ENCODE measurements at regions of chr2 and their contacts with region 1.

Region 1: DNA sequence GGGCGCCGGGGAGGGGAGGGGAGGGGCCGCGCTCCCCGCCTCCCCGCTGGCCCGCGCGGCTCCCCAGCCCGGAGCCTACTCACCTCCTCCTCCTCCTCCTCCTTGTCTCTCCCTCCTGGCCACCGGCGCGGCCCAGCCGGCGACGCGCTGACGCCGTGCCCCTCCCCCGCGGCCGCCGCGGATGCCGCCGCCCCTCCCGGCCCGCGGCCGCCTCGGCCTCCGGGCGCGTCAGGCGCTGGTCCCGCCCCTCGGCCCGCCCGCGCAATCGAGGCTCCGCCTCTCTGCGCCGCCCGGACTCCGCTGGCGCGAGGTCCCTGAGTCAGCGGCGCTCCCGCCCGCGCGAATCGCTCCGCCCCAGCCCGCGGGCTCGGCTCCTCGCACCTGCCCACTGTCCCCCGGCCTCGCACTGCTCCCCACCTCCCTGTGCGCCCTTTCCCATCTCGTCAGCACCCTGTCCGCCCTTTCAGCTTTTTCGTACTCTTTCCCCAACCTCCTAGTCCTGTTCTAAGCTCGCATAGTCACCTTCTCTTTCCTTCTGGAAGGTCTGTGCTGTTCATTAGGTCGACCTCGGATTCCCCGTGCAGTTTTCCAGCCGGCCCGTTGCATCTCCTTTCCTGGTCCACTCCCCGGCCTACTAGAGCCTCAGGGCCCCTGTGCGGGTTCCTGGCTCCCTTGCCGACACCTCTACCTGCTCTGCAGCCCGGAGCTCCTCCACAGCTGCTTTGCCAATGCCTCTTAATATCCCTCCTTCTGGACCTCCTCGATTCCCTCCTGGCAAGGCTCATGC is 187.4 kb downstream of the ZEB2 start:
- DNase-seq: peak; percentile 90
- H3K4me3 Mint-ChIP-seq: peak overlapping the region; percentile 92
- H3K27ac Mint-ChIP-seq: peak overlapping the region; percentile 82
- H3K4me1 Mint-ChIP-seq: peaks cover 44% of the 10 kb centered on the region
- H3K27me3 Mint-ChIP-seq: peaks cover 2% of the 10 kb centered on the region

Region 2: GRCh38 chr2:144111437-144111836 is 221.1 kb before region 1 on chr2:
- CTCF ChIA-PET with region 1: no interaction called
- POLR2A ChIA-PET with region 1: no interaction called
- DNase-seq: no peak
- H3K4me3 Mint-ChIP-seq: no peak overlapping the region
- H3K27ac Mint-ChIP-seq: no peak overlapping the region
- H3K4me1 Mint-ChIP-seq: no peaks in the 10 kb centered on the region
- H3K27me3 Mint-ChIP-seq: no peaks in the 10 kb centered on the region

Region 3: GRCh38 chr2:144183727-144184126 is 148.8 kb before region 1 on chr2:
- CTCF ChIA-PET with region 1: interaction called, 4 read pairs
- POLR2A ChIA-PET with region 1: interaction called, 29 read pairs
- DNase-seq: peak; percentile 82
- H3K4me3 Mint-ChIP-seq: peak overlapping the region; percentile 37
- H3K27ac Mint-ChIP-seq: peak overlapping the region; percentile 79
- H3K4me1 Mint-ChIP-seq: peaks cover 51% of the 10 kb centered on the region
- H3K27me3 Mint-ChIP-seq: no peaks in the 10 kb centered on the region

Region 4: GRCh38 chr2:144233317-144233716 is 99.2 kb before region 1 on chr2:
- CTCF ChIA-PET with region 1: no interaction called
- POLR2A ChIA-PET with region 1: interaction called, 19 read pairs
- DNase-seq: no peak
- H3K4me3 Mint-ChIP-seq: peak overlapping the region; percentile 23
- H3K27ac Mint-ChIP-seq: peak overlapping the region; percentile 87
- H3K4me1 Mint-ChIP-seq: peaks cover 69% of the 10 kb centered on the region
- H3K27me3 Mint-ChIP-seq: no peaks in the 10 kb centered on the region

Region 5: GRCh38 chr2:144240587-144241339 is 91.8 kb before region 1 on chr2:
- CTCF ChIA-PET with region 1: interaction called, 3 read pairs
- POLR2A ChIA-PET with region 1: interaction called, 19 read pairs
- DNase-seq: peak; percentile 32
- H3K4me3 Mint-ChIP-seq: no peak overlapping the region
- H3K27ac Mint-ChIP-seq: peak overlapping the region; percentile 79
- H3K4me1 Mint-ChIP-seq: peaks cover 61% of the 10 kb centered on the region
- H3K27me3 Mint-ChIP-seq: no peaks in the 10 kb centered on the region

Region 6: DNA sequence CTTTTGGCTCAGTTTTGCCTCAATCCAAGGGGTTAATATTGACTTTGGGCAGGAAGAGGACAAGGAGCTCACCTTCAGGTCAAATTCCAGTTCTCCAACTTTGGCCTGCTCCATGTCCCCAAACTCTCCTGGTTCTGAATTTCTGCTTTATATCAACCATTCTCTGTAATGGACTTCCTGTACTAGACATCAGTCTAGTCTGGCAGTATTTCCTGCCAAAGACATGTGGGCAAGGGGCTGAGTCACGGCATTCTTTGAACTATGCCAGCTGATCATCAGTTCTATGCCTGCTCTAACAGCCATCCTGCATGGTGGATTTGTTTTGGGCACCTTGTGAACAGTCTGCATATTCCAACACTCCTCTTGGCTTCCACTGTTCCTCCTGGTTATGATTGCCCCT is 12.1 kb before region 1 on chr2:
- CTCF ChIA-PET with region 1: no interaction called
- POLR2A ChIA-PET with region 1: interaction called, 34 read pairs
- DNase-seq: peak; percentile 65
- H3K4me3 Mint-ChIP-seq: peak overlapping the region; percentile 19
- H3K27ac Mint-ChIP-seq: peak overlapping the region; percentile 64
- H3K4me1 Mint-ChIP-seq: peaks cover 50% of the 10 kb centered on the region
- H3K27me3 Mint-ChIP-seq: no peaks in the 10 kb centered on the region

Region 7: DNA sequence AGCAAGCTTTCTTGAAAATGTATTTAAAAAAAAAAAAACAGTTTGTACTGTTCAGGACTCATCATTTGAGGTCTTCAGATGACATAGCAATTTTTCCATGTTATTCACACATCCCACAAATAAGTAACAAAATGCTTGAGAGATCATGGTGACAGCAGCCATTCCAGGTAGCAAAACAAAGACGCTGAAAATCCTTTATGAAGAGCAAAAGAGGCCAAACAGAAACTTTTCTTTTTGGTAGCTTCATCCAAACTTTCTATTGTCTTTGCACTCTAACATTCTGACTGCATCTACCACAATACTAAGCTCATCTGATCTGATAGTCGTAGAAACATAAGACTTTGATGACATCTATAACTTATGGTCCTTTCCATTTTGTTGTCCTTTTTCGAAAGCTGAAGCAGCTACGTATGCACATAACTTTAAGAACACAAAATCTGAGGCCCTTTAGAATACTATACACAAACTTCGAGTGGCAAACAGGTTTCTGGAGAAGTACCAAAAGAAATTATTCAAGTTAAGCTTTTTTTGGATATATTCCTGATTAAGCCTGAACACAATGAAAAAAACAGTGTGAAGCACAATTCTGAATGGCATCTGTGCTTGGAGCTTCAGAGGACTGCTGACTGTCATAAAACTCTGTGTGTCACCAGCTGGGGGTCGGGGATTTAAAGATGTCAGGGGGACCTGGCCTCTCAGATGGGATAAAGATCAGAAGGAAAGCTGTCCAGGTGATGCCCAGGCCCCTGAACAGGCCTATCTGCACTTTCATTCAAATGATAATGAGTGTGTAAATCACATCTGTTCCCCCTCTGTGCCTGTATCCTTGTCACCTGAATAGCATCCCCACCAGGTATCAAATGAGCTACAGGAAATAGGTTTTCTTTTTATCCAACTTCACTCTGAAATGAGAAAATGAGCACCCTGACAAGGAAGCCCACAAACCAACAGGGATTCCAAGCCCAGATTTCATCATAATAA is 111.6 kb after region 1 on chr2:
- CTCF ChIA-PET with region 1: no interaction called
- POLR2A ChIA-PET with region 1: no interaction called
- DNase-seq: no peak
- H3K4me3 Mint-ChIP-seq: no peak overlapping the region
- H3K27ac Mint-ChIP-seq: no peak overlapping the region
- H3K4me1 Mint-ChIP-seq: peaks cover 7% of the 10 kb centered on the region
- H3K27me3 Mint-ChIP-seq: no peaks in the 10 kb centered on the region

Region 8: GRCh38 chr2:144461308-144461766 is 128.8 kb after region 1 on chr2:
- CTCF ChIA-PET with region 1: no interaction called
- POLR2A ChIA-PET with region 1: no interaction called
- DNase-seq: no peak
- H3K4me3 Mint-ChIP-seq: no peak overlapping the region
- H3K27ac Mint-ChIP-seq: no peak overlapping the region
- H3K4me1 Mint-ChIP-seq: peaks cover 29% of the 10 kb centered on the region
- H3K27me3 Mint-ChIP-seq: no peaks in the 10 kb centered on the region

Region 9: GRCh38 chr2:144493027-144493809 is 160.7 kb after region 1 on chr2:
- CTCF ChIA-PET with region 1: no interaction called
- POLR2A ChIA-PET with region 1: no interaction called
- DNase-seq: no peak
- H3K4me3 Mint-ChIP-seq: no peak overlapping the region
- H3K27ac Mint-ChIP-seq: no peak overlapping the region
- H3K4me1 Mint-ChIP-seq: peaks cover 35% of the 10 kb centered on the region
- H3K27me3 Mint-ChIP-seq: no peaks in the 10 kb centered on the region